GM12878 (cell line): ENCODE measurements at regions of chr10 and their contacts with region 1.

Region 1: GRCh38 chr10:99845837-99846382 is 63.5 kb downstream of the ABCC2 start:
- DNase-seq: peak; percentile 59
- ATAC-seq: peak; percentile 95
- H3K4me3 ChIP-seq: 0 out of 2 replicates have a peak overlapping the region, but pooled peaks have one; percentile 34
- H3K27ac ChIP-seq: no peak overlapping the region
- H3K4me1 ChIP-seq: 0 out of 2 replicates have a peak, but pooled peaks cover 2% of the 10 kb centered on the region
- H3K27me3 ChIP-seq: no peaks in the 10 kb centered on the region
- CTCF ChIP-seq: peak; percentile 83 to 93 (median 89)
- EP300 ChIP-seq: no peak
- POLR2A ChIP-seq: no peak
- RAD21 ChIP-seq: peak; percentile 93

Region 2: DNA sequence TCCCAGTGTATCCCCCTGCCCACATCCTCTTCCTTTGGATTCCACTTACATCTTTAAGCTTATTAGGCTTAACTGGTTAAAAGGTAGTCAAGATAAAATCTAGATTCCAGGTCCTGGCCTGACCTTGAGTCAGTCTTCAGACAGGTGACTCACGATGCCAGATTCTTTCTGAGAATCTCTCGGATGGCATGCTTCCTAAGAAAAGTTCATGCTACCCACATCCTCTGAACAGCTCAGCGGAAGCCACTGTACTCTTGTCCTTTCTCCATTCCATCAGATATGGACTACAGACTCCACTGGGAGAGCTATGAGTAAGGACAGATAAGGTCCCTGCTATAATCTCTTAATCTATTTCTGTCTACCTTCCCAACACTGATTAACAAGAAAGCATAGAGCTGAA is 120.4 kb after region 1 on chr10:
- CTCF ChIA-PET with region 1: interaction called, 5 read pairs
- POLR2A ChIA-PET with region 1: no interaction called
- RAD21 ChIA-PET with region 1: interaction called, 10 read pairs
- SMC1A ChIA-PET with region 1: interaction called, 7 read pairs
- in situ Hi-C with region 1: no loop called
- intact Hi-C with region 1: no loop called
- DNase-seq: no peak
- ATAC-seq: no peak
- H3K4me3 ChIP-seq: no peak overlapping the region
- H3K27ac ChIP-seq: no peak overlapping the region
- H3K4me1 ChIP-seq: no peaks in the 10 kb centered on the region
- H3K27me3 ChIP-seq: no peaks in the 10 kb centered on the region
- CTCF ChIP-seq: no peak
- EP300 ChIP-seq: no peak
- POLR2A ChIP-seq: no peak
- RAD21 ChIP-seq: no peak

Region 3: GRCh38 chr10:100020142-100020885 is 174.4 kb after region 1 on chr10:
- CTCF ChIA-PET with region 1: interaction called, 18 read pairs
- POLR2A ChIA-PET with region 1: no interaction called
- RAD21 ChIA-PET with region 1: interaction called, 14 read pairs
- SMC1A ChIA-PET with region 1: interaction called, 14 read pairs
- in situ Hi-C with region 1: no loop called
- intact Hi-C with region 1: no loop called
- DNase-seq: peak; percentile 87
- ATAC-seq: peak; percentile 92
- H3K4me3 ChIP-seq: peak overlapping the region; percentile 41; the same call in 1 of the 2 replicates
- H3K27ac ChIP-seq: peak overlapping the region; percentile 94
- H3K4me1 ChIP-seq: peaks cover 29% of the 10 kb centered on the region
- H3K27me3 ChIP-seq: no peaks in the 10 kb centered on the region
- CTCF ChIP-seq: peak in 2 of 3 experiments; percentile 28 to 44; a peak in 3 of 6 replicates
- EP300 ChIP-seq: peak in 1 of 2 experiments; percentile 31; a peak in 1 of 4 replicates
- POLR2A ChIP-seq: no peak
- RAD21 ChIP-seq: peak; percentile 56

Region 4: GRCh38 chr10:100100651-100101184 is 254.8 kb after region 1 on chr10:
- CTCF ChIA-PET with region 1: interaction called, 9 read pairs
- POLR2A ChIA-PET with region 1: no interaction called
- RAD21 ChIA-PET with region 1: no interaction called
- SMC1A ChIA-PET with region 1: interaction called, 4 read pairs
- in situ Hi-C with region 1: no loop called
- intact Hi-C with region 1: loop called (anchors 1 kb)
- DNase-seq: no peak
- ATAC-seq: peak; percentile 41; the same call in 2 of the 3 replicates
- H3K4me3 ChIP-seq: no peak overlapping the region
- H3K27ac ChIP-seq: no peak overlapping the region
- H3K4me1 ChIP-seq: no peaks in the 10 kb centered on the region
- H3K27me3 ChIP-seq: peaks cover 0 to 2% of the 10 kb centered on the region in 2 experiments; a peak in 1 of 4 replicates
- CTCF ChIP-seq: peak; percentile 23 to 41 (median 32); a peak in 4 of 6 replicates
- EP300 ChIP-seq: no peak
- POLR2A ChIP-seq: no peak
- RAD21 ChIP-seq: peak; percentile 61

Region 5: DNA sequence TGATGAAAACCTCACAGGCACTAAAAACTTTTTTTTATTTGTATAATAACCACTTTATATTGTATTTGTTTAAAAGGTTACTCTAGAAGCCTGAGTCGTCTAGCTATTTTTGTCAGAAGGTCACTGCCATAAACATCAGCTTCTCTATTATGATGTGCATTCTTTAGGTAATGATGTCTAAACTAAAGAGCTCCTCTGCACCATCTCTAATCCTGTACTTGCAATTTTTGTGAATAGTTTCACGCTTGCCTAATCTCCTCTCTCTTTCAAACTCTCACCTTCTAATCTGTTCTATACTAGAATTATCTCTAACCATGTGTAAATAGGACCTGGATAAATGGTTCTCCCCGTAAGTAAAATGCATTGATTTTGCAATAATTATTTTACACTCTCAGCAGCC is 393.9 kb after region 1 on chr10:
- CTCF ChIA-PET with region 1: interaction called, 9 read pairs
- POLR2A ChIA-PET with region 1: no interaction called
- RAD21 ChIA-PET with region 1: interaction called, 3 read pairs
- SMC1A ChIA-PET with region 1: interaction called, 3 read pairs
- in situ Hi-C with region 1: no loop called
- intact Hi-C with region 1: loop called (anchors 5 kb)
- DNase-seq: no peak
- ATAC-seq: no peak
- H3K4me3 ChIP-seq: no peak overlapping the region
- H3K27ac ChIP-seq: no peak overlapping the region
- H3K4me1 ChIP-seq: peaks cover 6% of the 10 kb centered on the region; the same call in 1 of the 2 replicates
- H3K27me3 ChIP-seq: no peaks in the 10 kb centered on the region
- CTCF ChIP-seq: no peak
- EP300 ChIP-seq: no peak
- POLR2A ChIP-seq: no peak
- RAD21 ChIP-seq: no peak

Region 6: GRCh38 chr10:100508691-100509150 is 662.8 kb after region 1 on chr10:
- CTCF ChIA-PET with region 1: no interaction called
- POLR2A ChIA-PET with region 1: no interaction called
- RAD21 ChIA-PET with region 1: interaction called, 5 read pairs
- SMC1A ChIA-PET with region 1: no interaction called
- in situ Hi-C with region 1: no loop called
- intact Hi-C with region 1: loop called (anchors 5 kb)
- DNase-seq: no peak
- ATAC-seq: peak; percentile 94
- H3K4me3 ChIP-seq: no peak overlapping the region
- H3K27ac ChIP-seq: no peak overlapping the region
- H3K4me1 ChIP-seq: peaks cover 8% of the 10 kb centered on the region; the same call in 1 of the 2 replicates
- H3K27me3 ChIP-seq: no peaks in the 10 kb centered on the region
- CTCF ChIP-seq: peak; percentile 34 to 64 (median 51)
- EP300 ChIP-seq: no peak
- POLR2A ChIP-seq: no peak
- RAD21 ChIP-seq: peak; percentile 62